Vagina (tissue), 2 donors: ENCODE measurements at regions of chr3 and their contacts with region 1.

Region 1: DNA sequence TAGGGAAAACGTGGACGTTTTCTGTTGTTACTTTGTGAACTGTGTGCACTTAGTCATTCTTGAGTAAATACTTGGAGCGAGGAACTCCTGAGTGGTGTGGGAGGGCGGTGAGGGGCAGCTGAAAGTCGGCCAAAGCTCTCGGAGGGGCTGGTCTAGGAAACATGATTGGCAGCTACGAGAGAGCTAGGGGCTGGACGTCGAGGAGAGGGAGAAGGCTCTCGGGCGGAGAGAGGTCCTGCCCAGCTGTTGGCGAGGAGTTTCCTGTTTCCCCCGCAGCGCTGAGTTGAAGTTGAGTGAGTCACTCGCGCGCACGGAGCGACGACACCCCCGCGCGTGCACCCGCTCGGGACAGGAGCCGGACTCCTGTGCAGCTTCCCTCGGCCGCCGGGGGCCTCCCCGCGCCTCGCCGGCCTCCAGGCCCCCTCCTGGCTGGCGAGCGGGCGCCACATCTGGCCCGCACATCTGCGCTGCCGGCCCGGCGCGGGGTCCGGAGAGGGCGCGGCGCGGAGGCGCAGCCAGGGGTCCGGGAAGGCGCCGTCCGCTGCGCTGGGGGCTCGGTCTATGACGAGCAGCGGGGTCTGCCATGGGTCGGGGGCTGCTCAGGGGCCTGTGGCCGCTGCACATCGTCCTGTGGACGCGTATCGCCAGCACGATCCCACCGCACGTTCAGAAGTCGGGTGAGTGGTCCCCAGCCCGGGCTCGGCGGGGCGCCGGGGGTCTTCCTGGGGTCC is at the start of gene TGFBR2:
- DNase-seq: peak in 1 of 2 donors; percentile 98
- H3K4me3 ChIP-seq: peak within 1 kb of the TSS; percentile 75 to 92
- H3K27ac ChIP-seq: peak within 1 kb of the TSS; percentile 96
- H3K4me1 ChIP-seq: peaks cover 14% of the 10 kb centered on the region
- H3K27me3 ChIP-seq: no peaks in the 10 kb centered on the region
- CTCF ChIP-seq: no peak
- POLR2A ChIP-seq: peak in 1 of 2 donors; percentile 84
- total RNA-seq, gene TGFBR2: 176 TPM

Region 2: DNA sequence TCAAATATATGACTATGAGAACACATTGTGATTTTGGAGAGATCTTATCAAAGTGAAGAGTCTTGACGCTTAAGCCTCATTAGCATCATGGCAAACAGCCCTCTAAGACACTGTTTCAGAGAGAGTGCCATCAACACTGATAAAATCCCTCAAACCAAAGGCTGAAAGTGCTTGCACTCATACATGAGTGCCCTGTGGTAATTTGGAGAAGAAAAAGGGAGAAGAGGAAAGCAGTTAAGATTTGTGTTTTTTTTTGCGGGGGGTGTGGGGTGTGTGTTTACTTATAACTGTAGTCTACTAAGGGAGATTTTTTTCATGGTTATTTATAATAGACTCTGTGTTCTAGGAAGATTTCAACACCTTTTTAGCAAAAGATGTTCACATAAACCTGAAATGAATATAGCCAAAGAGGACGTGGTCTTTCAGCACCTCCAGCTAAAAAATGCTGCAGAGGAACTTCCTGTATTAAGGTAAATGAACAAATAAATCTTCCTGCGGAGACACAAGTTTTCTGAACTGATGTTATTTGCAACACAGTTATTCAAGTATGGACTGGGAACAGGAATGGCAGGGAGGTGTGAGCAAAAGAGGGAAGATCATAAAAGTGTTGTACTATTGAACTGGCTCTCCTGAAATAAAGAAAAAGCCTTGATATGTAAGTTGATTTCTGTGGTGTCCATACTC is 82.0 kb before region 1 on chr3:
- intact Hi-C with region 1: loop called (anchors 10 kb)
- DNase-seq: no peak
- H3K4me3 ChIP-seq: no peak overlapping the region
- H3K27ac ChIP-seq: no peak overlapping the region
- H3K4me1 ChIP-seq: no peaks in the 10 kb centered on the region
- H3K27me3 ChIP-seq: no peaks in the 10 kb centered on the region
- CTCF ChIP-seq: no peak
- POLR2A ChIP-seq: no peak